ENCODE measurements at regions of chr3 and their contacts with region 1.

Region 1: GRCh38 chr3:14716591-14716990 is 41.6 kb downstream of the C3orf20 start:
- DNase-seq: no peak
- ATAC-seq: no peak
- H3K4me3 Mint-ChIP-seq: no peak overlapping the region
- H3K27ac Mint-ChIP-seq: no peak overlapping the region
- H3K4me1 Mint-ChIP-seq: no peaks in the 10 kb centered on the region
- H3K27me3 Mint-ChIP-seq: peaks cover 3% of the 10 kb centered on the region

Region 2: DNA sequence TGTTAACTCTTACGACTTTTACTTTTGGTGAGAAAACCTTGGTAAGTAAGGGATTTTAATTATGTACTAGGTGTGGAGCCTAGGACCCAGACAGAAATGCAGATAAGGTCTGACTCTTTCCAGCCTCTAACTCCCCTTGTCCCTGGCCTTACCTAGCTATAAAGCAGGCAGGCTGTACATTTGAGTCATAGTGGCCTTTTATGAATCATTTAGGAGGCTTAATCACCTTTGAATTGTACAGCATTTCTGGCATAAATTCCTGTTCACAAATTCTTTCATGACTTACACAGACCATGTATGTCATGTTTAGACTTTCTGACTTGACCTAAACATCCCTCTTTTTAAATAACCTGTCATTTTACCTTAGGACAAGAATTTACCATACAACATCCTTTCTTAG is 639.3 kb before region 1 on chr3:
- CTCF ChIA-PET with region 1: no interaction called
- POLR2A ChIA-PET with region 1: interaction called, 13 read pairs
- intact Hi-C with region 1: no loop called
- DNase-seq: no peak
- ATAC-seq: peak; percentile 37
- H3K4me3 Mint-ChIP-seq: no peak overlapping the region
- H3K27ac Mint-ChIP-seq: no peak overlapping the region
- H3K4me1 Mint-ChIP-seq: peaks cover 6% of the 10 kb centered on the region
- H3K27me3 Mint-ChIP-seq: peaks cover 11% of the 10 kb centered on the region

Region 3: GRCh38 chr3:15032650-15033049 is 316.1 kb after region 1 on chr3:
- CTCF ChIA-PET with region 1: no interaction called
- POLR2A ChIA-PET with region 1: no interaction called
- intact Hi-C with region 1: no loop called
- DNase-seq: no peak
- ATAC-seq: no peak
- H3K4me3 Mint-ChIP-seq: no peak overlapping the region
- H3K27ac Mint-ChIP-seq: no peak overlapping the region
- H3K4me1 Mint-ChIP-seq: no peaks in the 10 kb centered on the region
- H3K27me3 Mint-ChIP-seq: no peaks in the 10 kb centered on the region

Measured in activated CD4-positive, alpha-beta T cell treated with anti-CD3 and anti-CD28 coated beads for 36 hours (primary cell).